Activated CD4-positive, alpha-beta memory T cell treated with anti-CD3 and anti-CD28 coated beads, Interleukin-2, amount 10 ng/mL, durations not matched to agents 7 days and 5 days (primary cell): ENCODE measurements at regions of chr2 and their contacts with region 1.

Region 1: GRCh38 chr2:109545828-109546713 is 67.7 kb downstream of the SEPTIN10 start:
- DNase-seq: peak; percentile 57
- H3K4me3 Mint-ChIP-seq: no peak overlapping the region
- H3K27ac Mint-ChIP-seq: no peak overlapping the region
- H3K4me1 Mint-ChIP-seq: no peaks in the 10 kb centered on the region
- H3K27me3 Mint-ChIP-seq: peaks cover 15% of the 10 kb centered on the region

Region 2: DNA sequence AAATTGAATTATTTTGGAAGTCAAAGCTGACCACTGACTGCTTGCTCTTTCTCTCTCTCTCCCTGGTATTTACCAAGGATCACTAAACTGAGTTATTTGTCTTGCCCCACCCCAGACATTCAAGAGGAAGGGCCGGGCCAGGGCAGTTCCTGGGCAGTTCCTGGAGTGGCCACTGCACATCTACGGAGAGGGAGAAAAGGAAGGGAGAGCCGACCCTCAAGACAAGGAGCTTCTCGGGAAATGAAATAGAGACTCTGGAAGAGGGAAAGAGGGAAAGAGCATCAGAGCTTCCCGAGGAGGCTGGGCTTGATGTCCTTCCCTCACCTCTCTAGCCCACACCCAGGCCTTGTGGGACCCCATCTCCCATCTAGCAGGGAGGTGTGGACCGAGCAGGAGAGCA is 15.4 kb before region 1 on chr2:
- CTCF ChIA-PET with region 1: interaction called, 22 read pairs
- POLR2A ChIA-PET with region 1: no interaction called
- DNase-seq: no peak
- H3K4me3 Mint-ChIP-seq: no peak overlapping the region
- H3K27ac Mint-ChIP-seq: no peak overlapping the region
- H3K4me1 Mint-ChIP-seq: no peaks in the 10 kb centered on the region
- H3K27me3 Mint-ChIP-seq: peaks cover 17% of the 10 kb centered on the region

Region 3: GRCh38 chr2:109736177-109736827 is 190.2 kb after region 1 on chr2:
- CTCF ChIA-PET with region 1: interaction called, 14 read pairs
- POLR2A ChIA-PET with region 1: no interaction called
- DNase-seq: peak; percentile 22
- H3K4me3 Mint-ChIP-seq: no peak overlapping the region
- H3K27ac Mint-ChIP-seq: no peak overlapping the region
- H3K4me1 Mint-ChIP-seq: no peaks in the 10 kb centered on the region
- H3K27me3 Mint-ChIP-seq: peaks cover 19% of the 10 kb centered on the region